ENCODE measurements at regions of chr3 and their contacts with region 1.

Region 1: DNA sequence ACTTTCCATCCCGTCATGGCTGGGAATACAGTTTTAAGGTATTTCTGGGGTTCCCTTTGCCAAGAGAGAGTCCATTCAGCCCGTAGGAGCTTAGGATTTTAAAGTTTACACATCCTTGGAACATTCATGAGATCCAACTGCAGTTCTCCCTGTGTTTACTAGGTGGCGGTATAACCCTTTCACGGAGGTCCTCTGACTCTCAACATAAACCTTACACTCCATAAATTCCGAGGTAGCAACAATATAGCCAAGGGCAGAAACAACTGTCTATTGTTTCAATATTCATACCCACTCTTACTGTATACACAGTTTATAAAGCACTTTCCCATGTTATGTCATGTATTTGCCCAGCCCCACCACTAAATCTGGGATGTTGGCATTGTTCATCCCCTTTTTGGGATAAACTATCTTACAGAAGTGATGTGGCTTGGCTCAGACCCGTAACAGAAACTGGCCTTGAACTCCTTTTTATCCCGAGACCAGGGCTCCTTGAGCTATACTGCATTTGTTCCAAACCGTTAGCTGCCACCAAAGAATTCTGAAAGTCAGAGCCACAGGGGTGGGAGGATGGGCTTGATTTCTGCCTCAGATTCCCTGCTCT is 69.2 kb upstream of the COL6A5 start:
- DNase-seq: no peak
- ATAC-seq: peak; percentile 61 to 73

Region 2: DNA sequence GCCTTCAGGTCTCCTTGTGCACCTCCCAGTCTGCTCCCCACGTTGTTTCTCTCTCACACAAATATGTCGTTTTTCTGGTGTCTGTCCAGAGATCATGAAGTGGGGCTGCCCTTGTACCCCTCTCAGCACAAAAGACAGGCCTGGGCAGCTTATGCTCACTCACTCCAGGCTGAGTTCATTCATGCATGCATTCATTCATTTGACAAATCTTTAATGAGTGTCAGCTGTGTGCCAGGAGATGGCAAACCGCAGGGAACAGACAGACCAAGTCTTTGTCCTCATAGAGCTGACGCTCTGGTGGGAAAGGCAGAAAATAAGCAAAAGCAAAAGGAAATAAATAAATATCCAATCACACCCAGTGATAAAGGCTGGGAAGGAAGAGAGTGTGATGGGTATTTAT is 309.4 kb before region 1 on chr3:
- intact Hi-C with region 1: no loop called
- DNase-seq: no peak
- ATAC-seq: no peak

Region 3: DNA sequence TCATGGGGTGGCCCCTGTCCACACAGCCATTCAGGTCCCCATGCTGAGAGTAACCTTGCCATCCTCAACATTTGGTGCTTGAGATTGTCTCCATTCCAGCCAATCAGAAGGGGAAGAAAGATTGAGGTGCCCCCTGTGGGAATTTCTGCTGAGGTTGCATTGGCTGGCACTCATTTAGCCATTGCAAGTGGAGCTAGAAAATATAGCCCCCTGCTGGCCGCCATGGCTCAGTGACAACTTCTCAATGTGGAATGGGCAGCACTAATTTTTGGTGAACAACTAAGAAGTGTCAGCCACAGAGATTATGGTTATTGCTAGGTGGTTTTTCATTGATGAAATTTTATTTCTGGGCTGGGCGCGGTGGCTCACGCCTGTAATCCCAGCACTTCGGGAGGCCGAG is 262.7 kb after region 1 on chr3:
- intact Hi-C with region 1: loop called in 1 of 2 experiments (anchors 2 kb)
- DNase-seq: peak; percentile 30
- ATAC-seq: peak in 1 of 2 donors; percentile 23

Measured in left cardiac atrium (tissue), 4 donors.